Heart right ventricle (tissue), 16 donors: ENCODE measurements at regions of chr3 and their contacts with region 1.

Region 1: GRCh38 chr3:16884084-16884747 is 539 bp upstream of the PLCL2 start:
- DNase-seq: peak; percentile 74 to 84
- ATAC-seq: peak; percentile 66 to 89 (median 78)
- H3K4me3 ChIP-seq: peak overlapping the region; percentile 76 to 97 (median 86)
- H3K27ac ChIP-seq: peak overlapping the region; percentile 85 to 98 (median 96)
- H3K4me1 ChIP-seq: peaks cover 6 to 65% (median 38%) of the 10 kb centered on the region in 9 donors
- H3K27me3 ChIP-seq: no peaks in the 10 kb centered on the region
- CTCF ChIP-seq: peak; percentile 50 to 79 (median 72)

Region 2: DNA sequence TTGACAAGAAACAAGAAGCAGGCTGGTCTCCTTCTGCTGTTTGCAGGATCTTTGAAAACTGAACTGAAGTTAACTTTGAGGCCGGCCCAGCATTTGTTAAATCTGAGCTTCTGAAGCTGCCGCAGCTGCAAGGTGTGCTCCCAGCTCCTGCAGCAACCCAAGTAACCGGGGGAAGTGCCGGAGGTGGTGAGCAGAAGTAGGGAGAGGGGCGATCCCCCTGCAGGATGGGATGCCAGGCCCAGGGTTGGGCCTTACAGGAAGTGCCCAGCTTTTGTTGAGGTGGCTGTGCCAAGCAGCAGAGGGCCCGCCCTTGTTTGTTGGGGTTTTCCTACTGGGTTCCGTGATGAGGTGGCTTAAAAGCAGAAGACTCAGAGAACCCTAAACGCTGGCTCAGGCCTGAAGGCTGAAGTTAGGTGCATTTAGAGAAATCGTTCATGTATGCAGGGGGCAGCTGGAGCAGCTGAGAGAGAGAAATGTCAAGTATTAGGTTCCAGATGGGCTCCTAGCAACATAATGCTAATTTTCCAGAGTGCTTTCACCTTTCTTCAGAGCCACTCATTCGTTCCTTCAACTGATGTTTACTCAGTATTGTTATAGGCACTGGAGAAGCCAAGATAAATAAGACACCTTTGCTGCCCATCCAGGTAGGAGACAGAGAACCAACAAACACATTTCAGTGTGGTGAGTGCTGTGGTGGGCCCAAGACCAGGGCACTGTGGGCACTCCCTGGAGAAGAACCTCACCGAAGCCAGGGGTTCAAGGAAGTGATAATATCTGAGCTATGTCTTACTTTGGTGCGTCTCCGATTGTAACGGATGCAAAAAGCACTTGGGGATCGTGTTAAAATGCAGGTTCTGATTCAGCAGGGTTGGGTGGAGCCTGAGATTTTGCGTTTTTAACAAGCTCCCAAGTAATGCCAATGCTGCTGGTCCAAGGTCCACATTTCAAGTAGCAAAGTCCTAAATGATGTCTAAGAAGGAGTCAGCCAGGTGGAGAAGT is 41.6 kb before region 1 on chr3:
- intact Hi-C with region 1: loop called in 5 of 10 experiments (anchors 5 kb)
- DNase-seq: peak in 1 of 2 donors; percentile 32
- ATAC-seq: peak in 7 of 8 donors; percentile 33 to 66 (median 53)
- H3K4me3 ChIP-seq: peak overlapping the region in 1 of 10 donors; percentile 22
- H3K27ac ChIP-seq: peak overlapping the region in 5 of 10 donors; percentile 11 to 86 (median 30)
- H3K4me1 ChIP-seq: peaks cover 0 to 73% (median 16%) of the 10 kb centered on the region in 9 donors
- H3K27me3 ChIP-seq: no peaks in the 10 kb centered on the region
- CTCF ChIP-seq: no peak

Region 3: GRCh38 chr3:17023006-17023664 is 138.9 kb after region 1 on chr3:
- intact Hi-C with region 1: loop called in 4 of 10 experiments (anchors 5 to 10 kb)
- DNase-seq: no peak
- ATAC-seq: peak in 6 of 8 donors; percentile 32 to 82 (median 53)
- H3K4me3 ChIP-seq: no peak overlapping the region
- H3K27ac ChIP-seq: peak overlapping the region in 1 of 10 donors; percentile 29
- H3K4me1 ChIP-seq: peaks cover 0 to 18% (median 5%) of the 10 kb centered on the region in 9 donors
- H3K27me3 ChIP-seq: no peaks in the 10 kb centered on the region
- CTCF ChIP-seq: no peak

Region 4: GRCh38 chr3:17044855-17045254 is 160.6 kb after region 1 on chr3:
- intact Hi-C with region 1: loop called in 1 of 10 experiments (anchors 5 kb)
- DNase-seq: no peak
- ATAC-seq: no peak
- H3K4me3 ChIP-seq: no peak overlapping the region
- H3K27ac ChIP-seq: no peak overlapping the region
- H3K4me1 ChIP-seq: peaks cover 0 to 32% (median 14%) of the 10 kb centered on the region in 9 donors
- H3K27me3 ChIP-seq: no peaks in the 10 kb centered on the region
- CTCF ChIP-seq: no peak

Region 5: GRCh38 chr3:17233398-17233800 is 349.2 kb after region 1 on chr3:
- intact Hi-C with region 1: loop called in 4 of 10 experiments (anchors 5 to 10 kb)
- DNase-seq: peak in 1 of 2 donors; percentile 11
- ATAC-seq: peak; percentile 48 to 91 (median 82)
- H3K4me3 ChIP-seq: no peak overlapping the region
- H3K27ac ChIP-seq: no peak overlapping the region
- H3K4me1 ChIP-seq: peaks cover 0 to 35% (median 24%) of the 10 kb centered on the region in 9 donors
- H3K27me3 ChIP-seq: no peaks in the 10 kb centered on the region
- CTCF ChIP-seq: peak; percentile 40 to 84 (median 75)

Region 6: DNA sequence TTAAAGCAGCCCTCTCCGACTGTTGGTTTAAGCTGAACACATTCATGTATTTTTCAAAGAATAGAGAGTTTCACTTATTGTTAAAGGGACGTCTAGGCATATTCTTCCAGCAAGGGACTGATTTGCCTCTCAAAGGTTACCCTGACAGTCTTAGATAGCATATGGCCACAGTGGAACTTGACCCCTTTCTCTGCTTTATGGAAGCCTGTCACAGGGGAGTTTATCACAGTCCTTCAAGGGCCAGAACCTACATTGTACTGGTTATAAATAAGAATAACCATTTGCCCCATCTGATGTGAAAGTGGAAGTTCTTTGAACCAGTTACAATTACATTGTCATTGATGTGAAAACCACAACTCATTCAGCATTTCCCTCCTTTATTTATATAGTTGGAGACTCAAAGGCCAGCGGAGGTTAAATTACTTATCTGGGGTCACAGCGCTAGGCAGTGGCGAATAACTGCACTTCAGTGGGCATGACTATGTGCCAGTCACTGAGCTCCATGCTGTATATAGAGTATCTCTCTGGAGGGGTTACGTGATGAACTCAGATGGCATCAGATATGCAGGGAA is 918.7 kb after region 1 on chr3:
- intact Hi-C with region 1: no loop called
- DNase-seq: no peak
- ATAC-seq: no peak
- H3K4me3 ChIP-seq: no peak overlapping the region
- H3K27ac ChIP-seq: no peak overlapping the region
- H3K4me1 ChIP-seq: no peaks in the 10 kb centered on the region
- H3K27me3 ChIP-seq: no peaks in the 10 kb centered on the region
- CTCF ChIP-seq: no peak